Activated T-helper 1 cell treated with anti-CD3 and anti-CD28 coated beads, Interleukin-12 subunit alpha, Interleukin-12 subunit beta, Interleukin-2, Interleukin-4 antibody, amounts not matched to agents 30 ng/mL and 10 ng/mL and 1 ng/mL, durations not matched to agents 14 hours and 24 hours and 36 hours (primary cell): ENCODE measurements at regions of chr10 and their contacts with region 1.

Region 1: DNA sequence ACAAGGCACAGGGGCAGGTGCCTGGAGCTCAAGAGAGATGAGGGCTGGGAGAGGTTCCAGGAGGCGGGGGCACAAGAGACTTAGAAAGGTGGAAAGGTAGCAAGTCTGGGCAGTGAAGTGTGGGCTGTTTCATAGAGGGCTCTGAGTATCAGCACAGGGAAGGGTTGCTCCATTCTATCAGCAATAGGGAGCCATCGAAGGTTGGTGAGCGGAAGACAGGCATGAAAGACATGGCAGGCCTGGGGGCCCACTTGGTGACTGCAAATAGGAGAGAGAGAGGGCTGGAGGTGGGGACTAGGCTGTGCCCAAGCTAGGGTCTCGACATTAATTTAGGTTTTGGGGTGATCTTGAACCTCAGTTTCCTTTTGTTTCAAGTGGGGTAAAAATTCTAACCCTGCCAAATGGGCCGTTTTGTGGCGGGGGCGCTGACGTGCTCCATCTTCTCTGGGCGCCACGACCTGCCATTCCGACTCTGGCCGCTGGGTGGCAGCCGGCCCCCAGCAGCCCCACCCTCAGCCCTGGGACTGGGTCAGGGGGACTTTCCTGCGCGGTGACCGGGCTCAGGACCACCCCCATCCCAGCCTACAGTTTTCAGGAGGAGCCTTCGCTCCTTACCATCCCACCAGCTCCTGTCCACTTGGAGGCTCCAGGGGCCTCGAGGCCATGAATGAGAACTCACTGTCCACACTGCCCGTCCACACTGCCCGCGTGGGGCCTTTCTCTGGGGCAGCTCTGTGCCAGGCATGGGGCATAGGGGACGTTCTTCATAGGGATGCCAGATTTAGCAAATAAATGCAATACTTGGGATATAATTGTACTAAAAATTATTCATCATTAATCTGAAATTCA is 37.2 kb upstream of the PCBD1 start:
- DNase-seq: peak; percentile 17
- H3K4me3 Mint-ChIP-seq: no peak overlapping the region
- H3K27ac Mint-ChIP-seq: no peak overlapping the region
- H3K4me1 Mint-ChIP-seq: no peaks in the 10 kb centered on the region
- H3K27me3 Mint-ChIP-seq: peaks cover 12% of the 10 kb centered on the region

Region 2: GRCh38 chr10:71025535-71025934 is 99.9 kb after region 1 on chr10:
- intact Hi-C with region 1: no loop called
- DNase-seq: no peak
- H3K4me3 Mint-ChIP-seq: no peak overlapping the region
- H3K27ac Mint-ChIP-seq: no peak overlapping the region
- H3K4me1 Mint-ChIP-seq: no peaks in the 10 kb centered on the region
- H3K27me3 Mint-ChIP-seq: no peaks in the 10 kb centered on the region

Region 3: DNA sequence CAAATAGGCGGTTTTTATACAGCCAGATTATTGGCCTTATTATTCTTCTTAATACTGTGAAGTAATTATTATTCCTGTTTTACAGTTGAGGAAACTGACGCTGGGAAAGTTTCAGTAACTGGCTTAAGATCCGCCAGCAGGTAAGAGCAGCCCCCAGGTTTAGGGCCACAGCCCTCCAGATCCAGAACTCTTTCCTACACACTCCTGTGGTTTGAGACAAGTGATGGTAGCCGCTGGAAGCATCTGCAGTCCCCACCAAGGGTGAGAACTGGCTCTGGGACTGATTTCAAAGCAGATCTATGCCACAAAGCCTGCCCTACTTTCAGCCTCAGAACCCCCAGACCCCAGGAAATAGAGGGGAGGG is 283.7 kb after region 1 on chr10:
- intact Hi-C with region 1: loop called (anchors 1 kb)
- DNase-seq: no peak
- H3K4me3 Mint-ChIP-seq: no peak overlapping the region
- H3K27ac Mint-ChIP-seq: no peak overlapping the region
- H3K4me1 Mint-ChIP-seq: no peaks in the 10 kb centered on the region
- H3K27me3 Mint-ChIP-seq: peaks cover 72% of the 10 kb centered on the region

Region 4: DNA sequence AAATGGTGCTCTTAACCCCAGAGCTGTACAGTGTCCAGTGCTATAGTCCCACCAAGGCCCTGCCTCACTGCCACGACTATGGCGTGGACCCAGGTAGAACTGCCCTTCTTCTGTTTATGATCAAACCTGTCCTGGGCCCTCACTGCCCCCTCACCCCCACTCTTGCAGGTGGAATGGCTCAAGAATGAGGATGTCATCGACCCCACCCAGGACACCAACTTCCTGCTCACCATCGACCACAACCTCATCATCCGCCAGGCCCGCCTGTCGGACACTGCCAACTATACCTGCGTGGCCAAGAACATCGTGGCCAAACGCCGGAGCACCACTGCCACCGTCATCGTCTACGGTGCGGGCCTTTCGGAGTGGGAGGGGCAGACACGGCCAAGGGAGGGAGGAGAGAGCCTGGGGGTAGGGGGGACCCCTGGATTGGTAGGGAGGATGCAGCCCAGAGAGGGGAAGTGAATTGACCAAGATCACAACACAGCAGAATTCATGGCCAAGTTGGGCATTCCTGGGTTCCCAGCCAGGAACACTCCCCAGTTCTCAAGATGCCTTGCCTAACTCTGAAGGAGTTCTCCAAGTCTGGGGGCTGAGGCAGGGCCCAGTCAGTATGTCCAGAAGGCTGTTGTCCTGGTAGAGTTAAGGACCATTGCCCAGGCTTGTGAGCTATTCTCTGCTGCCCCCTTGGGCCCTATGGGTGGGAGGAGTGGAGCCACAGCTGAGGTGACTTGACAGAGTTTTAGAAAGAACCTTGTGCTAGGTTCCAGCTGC is 361.1 kb after region 1 on chr10:
- intact Hi-C with region 1: loop called (anchors 2 kb)
- DNase-seq: no peak
- H3K4me3 Mint-ChIP-seq: no peak overlapping the region
- H3K27ac Mint-ChIP-seq: no peak overlapping the region
- H3K4me1 Mint-ChIP-seq: no peaks in the 10 kb centered on the region
- H3K27me3 Mint-ChIP-seq: no peaks in the 10 kb centered on the region

Region 5: GRCh38 chr10:72133517-72133916 is 1207.9 kb after region 1 on chr10:
- intact Hi-C with region 1: no loop called
- DNase-seq: no peak
- H3K4me3 Mint-ChIP-seq: no peak overlapping the region
- H3K27ac Mint-ChIP-seq: peak overlapping the region; percentile 1
- H3K4me1 Mint-ChIP-seq: peaks cover 29% of the 10 kb centered on the region
- H3K27me3 Mint-ChIP-seq: no peaks in the 10 kb centered on the region